ENCODE measurements at regions of chr17 and their contacts with region 1.

Region 1: DNA sequence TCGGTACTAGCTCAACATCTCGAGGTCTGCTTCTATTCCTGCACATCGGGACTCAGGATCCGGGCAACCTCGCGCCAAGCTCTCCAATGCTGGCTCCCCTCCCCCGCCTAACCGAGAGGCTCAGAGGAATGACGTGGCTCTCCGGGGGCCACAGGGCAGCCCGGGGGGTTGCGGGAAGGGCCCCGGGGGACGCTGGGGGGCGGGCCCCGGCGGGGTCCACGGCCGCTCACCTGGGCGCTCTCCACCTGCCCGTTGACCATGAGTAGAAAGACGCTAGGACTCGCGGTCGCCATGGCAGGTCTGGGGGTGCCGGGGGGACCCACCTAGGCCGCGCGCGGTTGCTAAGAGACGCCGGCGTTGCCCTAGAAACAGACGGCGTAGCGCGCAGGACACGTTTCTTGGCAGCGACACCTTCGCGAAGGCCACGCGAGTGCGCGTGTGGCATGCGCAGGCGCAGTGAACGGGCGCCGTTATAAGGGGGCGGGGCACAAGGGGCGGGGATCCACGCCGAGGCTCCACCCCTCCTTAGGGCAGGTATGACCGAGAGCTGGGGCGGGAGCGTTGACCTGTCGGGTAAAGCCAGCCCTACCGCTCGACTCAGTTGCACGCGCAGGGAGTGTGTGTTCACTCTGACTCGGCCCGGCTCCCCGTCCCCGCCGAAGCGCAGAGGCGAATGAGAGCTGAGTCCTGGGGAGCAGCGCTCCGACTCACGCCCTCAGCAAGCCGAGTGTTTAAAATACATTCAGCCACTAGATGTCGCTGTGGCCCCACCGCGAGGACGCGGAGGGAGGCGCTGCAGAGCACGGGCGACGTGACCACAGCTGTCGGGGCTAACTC is at the start of gene B9D1:
- DNase-seq: peak; percentile 95
- H3K4me3 ChIP-seq: peak within 1 kb of the TSS; percentile 79
- H3K27ac ChIP-seq: peak within 1 kb of the TSS; percentile 63 to 85
- H3K4me1 ChIP-seq: peaks cover 12% of the 10 kb centered on the region
- H3K27me3 ChIP-seq: no peaks in the 10 kb centered on the region
- CTCF ChIP-seq: peak; percentile 95 to 99 (median 99)
- POLR2A ChIP-seq: no peak
- total RNA-seq, gene B9D1: 42.1 to 59.9 TPM

Region 2: DNA sequence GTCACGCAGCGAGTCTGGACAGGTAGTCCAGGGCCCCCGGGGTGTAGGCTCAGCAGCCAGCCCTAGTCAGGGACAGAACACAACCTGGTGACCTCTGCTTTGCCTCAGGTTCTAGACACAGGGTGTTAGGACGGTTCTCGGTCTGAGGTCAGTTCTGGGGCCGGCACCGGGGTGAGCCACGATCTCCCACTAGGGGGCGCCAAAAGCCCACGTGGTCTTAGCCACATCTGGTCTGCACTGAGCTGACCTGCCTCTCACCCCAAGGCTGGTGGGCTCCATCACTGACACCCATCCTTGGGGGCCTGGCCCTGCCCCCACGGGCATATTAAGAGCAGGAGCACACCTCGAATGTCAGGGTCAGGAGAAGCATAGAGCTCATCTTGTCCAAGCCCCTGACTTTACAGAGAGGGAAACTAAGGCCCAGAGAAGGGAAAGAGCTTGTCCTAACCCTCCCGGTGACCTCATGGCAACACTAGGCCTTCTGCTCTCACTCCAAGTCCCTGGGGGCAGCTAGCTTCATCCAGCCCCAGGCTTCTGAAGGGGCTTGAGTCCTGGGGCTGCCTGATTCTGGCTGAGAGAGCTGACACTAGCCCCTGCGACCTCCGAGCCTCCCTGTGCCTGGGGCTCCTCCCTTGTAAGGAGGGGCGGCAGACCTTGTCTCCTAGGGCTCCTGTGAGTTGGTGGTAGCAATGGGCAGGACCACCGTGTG is 401.5 kb before region 1 on chr17:
- intact Hi-C with region 1: no loop called
- DNase-seq: peak; percentile 87
- H3K4me3 ChIP-seq: no peak overlapping the region
- H3K27ac ChIP-seq: no peak overlapping the region
- H3K4me1 ChIP-seq: no peaks in the 10 kb centered on the region
- H3K27me3 ChIP-seq: no peaks in the 10 kb centered on the region
- CTCF ChIP-seq: peak; percentile 72 to 91 (median 81)
- POLR2A ChIP-seq: no peak

Region 3: DNA sequence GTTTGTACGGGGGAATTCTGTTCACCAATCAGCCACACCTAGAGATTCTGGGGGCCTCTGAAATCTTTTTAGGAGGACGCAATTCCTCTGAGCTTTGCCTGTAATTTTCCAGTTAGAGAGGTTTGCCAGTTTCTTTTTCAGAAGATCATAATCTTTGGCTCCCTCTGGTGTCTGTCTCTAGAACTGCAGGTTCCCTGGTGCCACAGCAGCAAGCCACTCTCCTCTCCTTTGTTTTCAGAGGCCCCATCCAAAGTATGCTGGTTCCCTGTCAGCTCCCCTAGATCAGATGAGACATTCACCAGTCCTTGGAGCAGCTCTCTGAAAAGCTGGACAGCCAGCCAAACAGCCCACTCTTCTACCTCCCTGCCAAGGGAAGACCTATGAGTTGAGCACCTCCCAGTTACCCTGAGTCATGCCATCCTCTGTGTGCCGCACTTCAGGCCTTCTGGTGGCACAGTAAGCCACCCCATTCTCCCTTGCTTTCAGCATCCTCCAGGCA is 84.6 kb after region 1 on chr17:
- intact Hi-C with region 1: loop called (anchors 5 kb)
- DNase-seq: peak; percentile 88
- H3K4me3 ChIP-seq: peak overlapping the region; percentile 3 to 31
- H3K27ac ChIP-seq: peak overlapping the region in 1 of 2 donors; percentile 65
- H3K4me1 ChIP-seq: no peaks in the 10 kb centered on the region
- H3K27me3 ChIP-seq: no peaks in the 10 kb centered on the region
- CTCF ChIP-seq: peak; percentile 96 to 99 (median 97)
- POLR2A ChIP-seq: no peak

Region 4: GRCh38 chr17:19766422-19767270 is 404.2 kb after region 1 on chr17:
- intact Hi-C with region 1: loop called (anchors 10 kb)
- DNase-seq: peak; percentile 77
- H3K4me3 ChIP-seq: no peak overlapping the region
- H3K27ac ChIP-seq: no peak overlapping the region
- H3K4me1 ChIP-seq: no peaks in the 10 kb centered on the region
- H3K27me3 ChIP-seq: no peaks in the 10 kb centered on the region
- CTCF ChIP-seq: peak; percentile 76 to 90 (median 88)
- POLR2A ChIP-seq: no peak

Measured in testis (tissue), 5 donors.